ENCODE measurements at regions of chr6 and their contacts with region 1.

Region 1: DNA sequence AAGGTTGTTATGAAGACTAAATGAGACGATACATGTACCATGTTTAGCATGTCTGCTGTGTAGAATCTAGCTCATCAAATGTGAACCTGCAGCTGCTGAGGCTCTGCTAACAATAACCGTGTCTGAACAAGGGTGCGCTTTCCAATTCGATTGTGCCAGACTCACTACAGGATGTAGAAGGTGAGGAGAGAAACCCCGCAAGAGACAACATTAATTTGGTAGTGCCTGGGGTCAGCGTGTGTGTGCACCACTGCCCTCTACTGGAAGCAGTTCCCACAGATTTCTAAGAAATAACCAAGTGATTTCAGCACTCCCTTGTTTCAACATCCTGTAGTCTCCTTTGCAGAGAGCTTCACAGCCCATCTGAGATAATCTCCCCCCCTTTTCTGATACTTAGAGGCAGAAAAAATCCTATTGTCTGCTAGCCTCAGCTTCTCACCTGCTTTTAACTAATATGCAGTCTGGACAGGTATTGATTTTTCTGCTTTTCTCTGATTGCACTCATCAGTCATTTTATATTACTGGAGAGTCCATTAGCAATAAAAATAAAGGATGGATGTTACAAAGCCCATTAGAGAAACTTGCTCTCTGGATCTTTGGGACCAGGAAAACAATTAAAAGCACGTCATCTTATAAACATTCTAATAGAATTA is 96.7 kb upstream of the BACH2 start:
- DNase-seq: peak; percentile 92
- H3K4me3 Mint-ChIP-seq: no peak overlapping the region
- H3K27ac Mint-ChIP-seq: peak overlapping the region; percentile 70
- H3K4me1 Mint-ChIP-seq: peaks cover 78% of the 10 kb centered on the region
- H3K27me3 Mint-ChIP-seq: no peaks in the 10 kb centered on the region

Region 2: GRCh38 chr6:90025523-90026061 is 367.8 kb before region 1 on chr6:
- CTCF ChIA-PET with region 1: no interaction called
- intact Hi-C with region 1: loop called (anchors 5 kb)
- DNase-seq: peak; percentile 85
- H3K4me3 Mint-ChIP-seq: peak overlapping the region; percentile 47
- H3K27ac Mint-ChIP-seq: peak overlapping the region; percentile 87
- H3K4me1 Mint-ChIP-seq: peaks cover 93% of the 10 kb centered on the region
- H3K27me3 Mint-ChIP-seq: no peaks in the 10 kb centered on the region

Region 3: DNA sequence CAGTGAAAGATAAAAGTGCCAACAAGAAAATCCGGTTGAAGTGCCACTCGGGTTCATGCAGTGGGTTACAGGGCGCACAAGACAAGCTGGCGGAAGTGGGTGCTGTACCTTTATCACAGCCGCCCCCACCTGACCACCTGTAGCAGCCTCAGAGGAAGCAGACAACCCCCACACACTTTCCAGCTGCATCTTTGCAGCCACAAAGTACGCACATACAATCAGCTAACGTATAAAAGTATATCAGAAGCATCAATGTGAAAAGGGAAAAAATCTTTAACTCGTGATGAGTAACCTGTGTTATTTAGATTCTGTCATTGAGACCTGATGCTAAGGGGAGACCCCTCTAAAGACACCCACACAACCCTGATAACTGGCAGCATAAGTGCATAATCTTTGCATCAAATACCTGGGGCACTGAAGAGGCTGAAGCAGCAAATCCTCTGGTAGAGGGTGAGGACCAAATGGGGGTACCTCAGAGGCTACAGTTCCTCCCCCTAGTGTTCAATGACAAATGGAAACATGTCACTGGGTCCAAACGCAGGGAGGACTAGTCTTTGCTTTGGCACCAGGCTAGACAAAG is 118.8 kb before region 1 on chr6:
- CTCF ChIA-PET with region 1: interaction called, 9 read pairs
- intact Hi-C with region 1: loop called (anchors 1 kb)
- DNase-seq: peak; percentile 96
- H3K4me3 Mint-ChIP-seq: peak overlapping the region; percentile 36
- H3K27ac Mint-ChIP-seq: peak overlapping the region; percentile 97
- H3K4me1 Mint-ChIP-seq: peaks cover 91% of the 10 kb centered on the region
- H3K27me3 Mint-ChIP-seq: no peaks in the 10 kb centered on the region

Region 4: DNA sequence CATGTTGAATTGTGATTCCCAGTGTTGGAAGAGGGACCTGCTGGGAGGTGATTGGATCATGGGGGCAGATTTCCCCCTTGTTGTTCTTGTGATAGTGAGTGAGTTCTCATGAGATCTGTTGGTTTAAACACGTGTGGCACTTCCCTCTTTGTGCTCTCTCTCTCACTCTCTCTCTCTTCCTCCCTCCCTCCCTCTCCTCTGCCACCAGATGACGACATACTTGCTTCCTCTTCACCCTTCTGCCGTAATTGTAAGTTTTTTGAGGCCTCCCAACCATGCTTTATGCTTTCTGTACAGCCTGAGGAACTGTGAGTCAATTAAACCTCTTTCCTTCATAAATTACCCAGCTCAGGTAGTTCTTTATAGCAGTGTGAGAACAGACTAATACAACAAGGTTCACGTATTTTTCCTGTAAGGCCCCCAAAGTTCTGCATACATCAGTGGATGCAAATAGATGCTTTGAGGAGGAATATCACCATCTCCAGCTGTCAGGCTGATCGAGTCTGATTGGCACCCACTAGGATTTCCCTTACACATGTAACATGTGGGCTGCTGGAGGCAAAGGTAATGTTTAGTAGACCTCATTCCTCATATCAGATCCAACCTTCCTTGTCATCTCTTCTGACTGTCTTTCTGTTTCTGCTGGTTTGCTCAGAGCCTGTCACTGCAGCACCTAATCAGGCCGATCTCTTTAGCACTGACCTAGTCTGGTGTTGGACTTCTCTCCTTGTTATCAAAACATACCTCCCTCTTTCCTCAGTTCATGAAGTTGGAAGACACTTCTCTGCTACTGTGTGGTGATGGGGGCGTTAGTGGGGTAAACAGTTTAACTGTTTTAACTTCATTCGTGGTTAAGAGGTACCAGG is 42.4 kb before region 1 on chr6:
- CTCF ChIA-PET with region 1: interaction called, 6 read pairs
- intact Hi-C with region 1: loop called (anchors 1 kb)
- DNase-seq: peak; percentile 76
- H3K4me3 Mint-ChIP-seq: peak overlapping the region; percentile 68
- H3K27ac Mint-ChIP-seq: peak overlapping the region; percentile 91
- H3K4me1 Mint-ChIP-seq: peaks cover 52% of the 10 kb centered on the region
- H3K27me3 Mint-ChIP-seq: no peaks in the 10 kb centered on the region

Region 5: GRCh38 chr6:90444160-90444714 is 50.9 kb after region 1 on chr6:
- CTCF ChIA-PET with region 1: interaction called, 6 read pairs
- intact Hi-C with region 1: loop called (anchors 1 kb)
- DNase-seq: no peak
- H3K4me3 Mint-ChIP-seq: peak overlapping the region; percentile 62
- H3K27ac Mint-ChIP-seq: peak overlapping the region; percentile 95
- H3K4me1 Mint-ChIP-seq: peaks cover 56% of the 10 kb centered on the region
- H3K27me3 Mint-ChIP-seq: no peaks in the 10 kb centered on the region

Region 6: DNA sequence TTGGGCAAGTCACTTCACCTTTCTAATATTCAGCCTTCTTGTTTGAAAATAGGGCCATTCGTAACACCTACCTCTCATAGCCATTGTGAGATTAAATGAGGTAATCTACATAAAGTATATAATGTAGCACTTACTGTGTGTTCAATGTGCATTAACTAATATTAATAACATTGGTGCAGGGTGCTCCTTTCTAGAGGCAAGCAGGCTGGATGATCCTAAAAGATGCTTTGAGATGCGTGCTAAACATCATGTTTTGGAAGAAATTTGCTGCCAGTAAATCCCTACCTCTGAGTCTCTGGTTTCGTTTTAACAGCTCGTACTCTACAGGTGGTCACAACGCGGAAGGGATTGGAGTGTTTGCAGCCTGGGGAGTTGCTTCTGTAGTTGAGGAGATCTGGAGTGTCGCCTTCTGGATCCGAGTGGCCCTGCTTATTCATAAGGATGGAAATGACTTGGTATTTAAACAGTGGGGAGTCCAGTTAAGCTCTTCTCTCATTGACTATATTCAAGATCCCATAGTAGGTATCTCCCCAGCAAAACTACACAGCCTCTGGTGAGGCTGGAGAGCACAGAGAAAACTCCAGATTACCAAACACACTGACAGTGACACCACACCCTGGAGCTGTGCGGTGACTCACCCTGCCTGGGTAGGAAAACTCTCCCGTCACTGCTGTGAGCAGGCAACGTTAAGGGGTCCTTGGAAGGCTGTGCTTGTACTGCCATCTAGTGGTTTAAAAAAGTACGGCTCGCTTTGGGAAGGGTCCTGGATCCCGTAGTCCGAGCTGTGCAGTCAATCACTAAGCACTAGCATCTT is 85.6 kb after region 1 on chr6:
- CTCF ChIA-PET with region 1: interaction called, 89 read pairs
- intact Hi-C with region 1: loop called (anchors 1 kb)
- DNase-seq: peak; percentile 94
- H3K4me3 Mint-ChIP-seq: no peak overlapping the region
- H3K27ac Mint-ChIP-seq: peak overlapping the region; percentile 81
- H3K4me1 Mint-ChIP-seq: peaks cover 60% of the 10 kb centered on the region
- H3K27me3 Mint-ChIP-seq: no peaks in the 10 kb centered on the region